Posterior vena cava (tissue), 2 donors: ENCODE measurements at regions of chr2 and their contacts with region 1.

Region 1: GRCh38 chr2:219177552-219178376 is at the start of gene RETREG2:
- DNase-seq: peak; percentile 95
- total RNA-seq, gene RETREG2: 54.4 to 56.8 TPM

Region 2: DNA sequence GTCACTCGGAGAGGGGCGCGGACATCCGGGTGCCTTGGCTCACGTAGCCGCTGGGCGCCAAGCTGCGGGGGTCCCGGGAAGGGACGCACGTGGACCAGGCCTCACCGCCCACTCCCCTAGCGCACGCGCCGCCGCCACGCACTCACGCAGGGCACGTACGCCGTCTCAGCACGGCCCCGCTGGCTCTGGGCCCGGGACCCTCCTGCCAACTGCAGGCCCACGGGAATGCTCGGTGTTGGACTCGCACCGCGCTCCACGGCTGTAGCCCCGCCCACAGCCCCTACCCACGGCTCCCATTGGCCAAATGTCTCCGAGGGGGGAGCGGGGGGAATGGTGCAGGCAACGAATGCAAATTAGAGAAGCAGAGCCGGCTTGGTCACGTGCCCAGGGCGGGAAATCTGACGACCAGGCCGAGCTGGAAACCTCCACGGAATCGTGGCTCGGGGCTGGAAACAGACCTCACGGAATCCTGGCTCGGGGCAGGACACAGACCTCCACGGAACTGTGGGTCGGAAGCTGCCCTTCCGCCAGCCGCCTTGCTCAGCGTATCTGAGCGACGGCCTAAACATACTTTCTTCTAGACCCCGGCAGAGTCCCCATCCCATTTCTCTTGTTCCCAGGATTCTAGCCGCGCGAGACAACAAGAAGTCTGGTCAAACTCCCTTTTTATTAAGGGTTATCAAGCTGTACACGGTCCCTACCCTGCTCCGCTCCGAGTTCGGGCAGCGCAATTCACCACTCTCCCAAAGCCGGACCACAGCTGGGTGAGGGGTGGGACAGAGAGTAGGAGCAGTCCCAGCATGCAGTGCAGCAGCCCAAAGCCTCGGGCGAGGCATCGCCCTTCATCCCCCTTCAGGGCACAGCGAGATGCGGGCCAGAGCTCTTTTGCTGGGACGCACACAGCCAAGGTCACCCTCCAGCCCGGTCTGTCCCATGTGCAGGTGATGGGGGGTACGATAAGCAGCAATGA is 41.3 kb after region 1 on chr2 and contains the start of gene ABCB6:
- intact Hi-C with region 1: loop called in 1 of 2 experiments (anchors 5 kb)
- DNase-seq: peak; percentile 99
- total RNA-seq, gene ABCB6: 16.0 to 24.2 TPM